Dorsolateral prefrontal cortex (tissue), 120 donors: ENCODE measurements at regions of chr2 and their contacts with region 1.

Region 1: GRCh38 chr2:61632276-61633169 is 94.4 kb upstream of the XPO1 start:
- DNase-seq: no peak
- H3K4me3 ChIP-seq: no peak overlapping the region
- H3K27ac ChIP-seq: no peak overlapping the region
- H3K27me3 ChIP-seq: no peaks in the 10 kb centered on the region
- CTCF ChIP-seq: no peak

Region 2: GRCh38 chr2:61854474-61855182 is 222.1 kb after region 1 on chr2:
- intact Hi-C with region 1: loop called in 1 of 2 experiments (anchors 10 kb)
- DNase-seq: peak; percentile 66 to 97 (median 94)
- H3K4me3 ChIP-seq: peak overlapping the region; percentile 39 to 100 (median 88)
- H3K27ac ChIP-seq: peak overlapping the region; percentile 60 to 97 (median 89)
- H3K27me3 ChIP-seq: no peaks in the 10 kb centered on the region
- CTCF ChIP-seq: peak in 9 of 56 donors; percentile 4 to 24 (median 11)